ENCODE measurements at regions of chr18 and their contacts with region 1.

Region 1: GRCh38 chr18:63422087-63422809 is at the start of gene VPS4B:
- DNase-seq: peak; percentile 100
- ATAC-seq: peak; percentile 96
- H3K4me3 Mint-ChIP-seq: peak within 1 kb of the TSS; percentile 99
- H3K27ac Mint-ChIP-seq: peak within 1 kb of the TSS; percentile 98
- H3K4me1 Mint-ChIP-seq: peaks cover 37% of the 10 kb centered on the region
- H3K27me3 Mint-ChIP-seq: peaks cover 2% of the 10 kb centered on the region
- CTCF ChIP-seq: no peak
- total RNA-seq, gene VPS4B: 66.2 and 66.8 TPM in 2 replicates

Region 2: DNA sequence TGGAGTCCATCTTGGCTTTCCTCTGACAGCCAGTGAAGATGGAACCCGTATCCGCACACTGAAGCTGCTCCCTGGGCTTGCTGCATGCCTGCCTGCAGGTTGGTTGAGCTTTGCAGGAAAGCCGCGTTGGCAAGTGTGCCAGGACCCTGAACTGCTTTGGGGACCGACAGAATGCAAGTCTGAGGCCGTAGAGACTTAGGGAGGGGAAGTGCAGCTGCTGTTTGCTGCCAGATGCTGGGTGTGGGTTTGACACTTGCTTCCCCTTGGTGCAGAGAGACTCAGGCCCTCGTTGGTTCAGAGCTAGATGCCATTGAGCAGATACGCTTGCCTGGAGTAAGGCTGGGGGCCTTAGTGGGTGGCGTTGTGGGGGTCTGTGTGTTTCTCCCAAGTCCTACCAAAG is 720.0 kb before region 1 on chr18:
- CTCF ChIA-PET with region 1: no interaction called
- POLR2A ChIA-PET with region 1: interaction called, 10 read pairs
- intact Hi-C with region 1: no loop called
- DNase-seq: no peak
- ATAC-seq: no peak
- H3K4me3 Mint-ChIP-seq: no peak overlapping the region
- H3K27ac Mint-ChIP-seq: no peak overlapping the region
- H3K4me1 Mint-ChIP-seq: peaks cover 9% of the 10 kb centered on the region
- H3K27me3 Mint-ChIP-seq: no peaks in the 10 kb centered on the region
- CTCF ChIP-seq: no peak

Region 3: DNA sequence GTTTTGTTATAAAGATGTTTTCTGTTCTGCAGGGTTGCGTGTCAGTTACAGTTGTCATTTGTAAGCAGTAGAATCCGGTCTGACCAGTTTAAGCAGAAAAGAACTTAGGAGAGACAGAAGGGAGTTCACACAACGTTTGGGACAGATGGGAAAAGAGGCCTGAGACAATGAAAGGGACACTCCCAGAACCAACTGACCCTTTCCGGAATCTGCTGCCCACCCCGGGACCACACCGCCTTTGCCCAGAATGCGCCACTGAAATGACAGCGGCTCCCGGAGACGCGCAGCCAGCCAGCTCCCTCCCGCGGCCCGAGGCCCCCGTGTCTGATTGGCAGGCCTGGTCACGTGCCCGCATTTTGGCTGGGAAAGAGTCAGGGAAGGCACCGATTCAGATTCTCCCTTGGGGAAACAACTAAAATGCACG is 347.3 kb before region 1 on chr18:
- CTCF ChIA-PET with region 1: no interaction called
- POLR2A ChIA-PET with region 1: no interaction called
- intact Hi-C with region 1: loop called (anchors 2 kb)
- DNase-seq: peak; percentile 45
- ATAC-seq: peak; percentile 58
- H3K4me3 Mint-ChIP-seq: peak overlapping the region; percentile 78
- H3K27ac Mint-ChIP-seq: peak overlapping the region; percentile 0
- H3K4me1 Mint-ChIP-seq: peaks cover 25% of the 10 kb centered on the region
- H3K27me3 Mint-ChIP-seq: no peaks in the 10 kb centered on the region
- CTCF ChIP-seq: no peak

Region 4: DNA sequence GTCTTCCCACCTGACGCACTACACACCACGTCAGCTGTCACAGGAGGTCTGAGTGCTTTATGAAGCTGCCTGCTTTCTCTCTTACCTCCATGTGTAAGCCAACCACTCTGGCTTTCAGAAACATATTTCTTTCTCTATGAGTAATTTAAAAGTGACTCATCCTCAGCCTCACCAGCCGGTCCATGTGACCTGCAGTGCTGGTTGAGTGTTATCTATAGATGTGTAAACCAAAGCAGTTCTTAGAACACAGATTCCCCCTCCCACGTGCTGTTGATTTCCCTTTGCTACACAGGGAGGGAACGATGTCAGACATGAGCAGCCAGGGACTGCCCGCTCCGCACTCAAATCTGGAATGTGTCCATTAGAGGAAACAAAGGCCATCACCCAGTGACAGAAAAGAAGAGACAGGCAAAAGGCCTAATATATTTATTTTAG is 260.5 kb before region 1 on chr18:
- CTCF ChIA-PET with region 1: no interaction called
- POLR2A ChIA-PET with region 1: interaction called, 4 read pairs
- intact Hi-C with region 1: loop called (anchors 1 kb)
- DNase-seq: peak; percentile 48
- ATAC-seq: peak; percentile 62
- H3K4me3 Mint-ChIP-seq: peak overlapping the region; percentile 84
- H3K27ac Mint-ChIP-seq: peak overlapping the region; percentile 99
- H3K4me1 Mint-ChIP-seq: peaks cover 91% of the 10 kb centered on the region
- H3K27me3 Mint-ChIP-seq: no peaks in the 10 kb centered on the region
- CTCF ChIP-seq: no peak

Region 5: DNA sequence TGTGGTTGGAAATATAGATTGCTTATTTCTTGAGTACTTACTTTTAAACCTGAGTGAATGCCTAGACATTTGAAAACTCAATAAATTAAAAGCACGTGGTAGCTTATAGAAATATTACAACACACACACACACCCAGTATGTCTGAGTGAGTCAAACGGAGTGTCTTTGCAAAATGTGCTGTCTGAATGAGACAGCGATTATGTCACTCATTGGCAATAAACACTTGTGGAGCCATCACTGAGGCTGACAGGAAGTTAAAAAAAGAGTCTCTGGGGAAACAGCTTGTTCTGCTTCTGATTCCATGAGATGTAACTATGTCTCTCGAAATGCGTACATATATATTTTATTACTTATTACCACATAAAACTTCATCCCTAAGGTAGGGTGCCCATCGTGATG is 22.3 kb after region 1 on chr18:
- CTCF ChIA-PET with region 1: interaction called, 5 read pairs
- POLR2A ChIA-PET with region 1: interaction called, 11 read pairs
- intact Hi-C with region 1: loop called (anchors 1 kb)
- DNase-seq: no peak
- ATAC-seq: peak; percentile 92
- H3K4me3 Mint-ChIP-seq: peak overlapping the region; percentile 11
- H3K27ac Mint-ChIP-seq: peak overlapping the region; percentile 61
- H3K4me1 Mint-ChIP-seq: peaks cover 16% of the 10 kb centered on the region
- H3K27me3 Mint-ChIP-seq: no peaks in the 10 kb centered on the region
- CTCF ChIP-seq: no peak